ENCODE measurements at regions of chr9 and their contacts with region 1.

Region 1: DNA sequence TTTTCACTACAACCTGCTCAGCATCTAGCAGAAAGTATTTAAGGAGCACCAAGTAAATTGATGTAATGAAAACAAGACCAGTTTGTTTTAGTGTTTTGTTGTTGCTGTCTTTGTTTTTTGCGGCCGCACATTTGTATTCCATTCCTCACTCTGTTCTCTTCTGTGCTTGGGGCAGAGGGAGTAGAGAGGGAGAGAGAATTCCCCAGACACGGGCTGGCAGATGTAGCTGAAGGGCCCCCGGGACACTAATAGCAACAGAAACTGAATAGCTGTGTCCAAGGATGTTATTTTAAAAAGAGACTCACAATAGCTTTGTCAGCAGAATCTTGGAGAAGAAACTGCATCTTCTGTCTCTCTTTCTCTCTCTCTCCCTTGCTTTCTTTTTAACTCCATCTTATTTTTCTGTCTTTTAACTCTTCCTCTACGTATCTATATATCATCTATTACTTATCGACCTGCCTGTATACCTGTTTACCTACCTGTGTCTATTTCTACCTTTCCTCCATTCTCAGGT is 145.3 kb downstream of the PAPPA start:
- DNase-seq: no peak
- ATAC-seq: no peak
- H3K4me3 ChIP-seq: no peak overlapping the region
- H3K4me3 Mint-ChIP-seq: no peak overlapping the region
- H3K27ac ChIP-seq: no peak overlapping the region
- H3K27ac Mint-ChIP-seq: no peak overlapping the region
- H3K4me1 ChIP-seq: no peaks in the 10 kb centered on the region
- H3K4me1 Mint-ChIP-seq: no peaks in the 10 kb centered on the region
- H3K27me3 ChIP-seq: no peaks in the 10 kb centered on the region
- H3K27me3 Mint-ChIP-seq: peaks cover 4% of the 10 kb centered on the region
- CTCF ChIP-seq: no peak

Region 2: GRCh38 chr9:116313638-116314037 is 14.7 kb after region 1 on chr9:
- CTCF ChIA-PET with region 1: no interaction called
- POLR2A ChIA-PET with region 1: no interaction called
- intact Hi-C with region 1: no loop called
- DNase-seq: no peak
- ATAC-seq: no peak
- H3K4me3 ChIP-seq: no peak overlapping the region
- H3K4me3 Mint-ChIP-seq: no peak overlapping the region
- H3K27ac ChIP-seq: no peak overlapping the region
- H3K27ac Mint-ChIP-seq: no peak overlapping the region
- H3K4me1 ChIP-seq: no peaks in the 10 kb centered on the region
- H3K4me1 Mint-ChIP-seq: no peaks in the 10 kb centered on the region
- H3K27me3 ChIP-seq: no peaks in the 10 kb centered on the region
- H3K27me3 Mint-ChIP-seq: no peaks in the 10 kb centered on the region
- CTCF ChIP-seq: no peak

Region 3: DNA sequence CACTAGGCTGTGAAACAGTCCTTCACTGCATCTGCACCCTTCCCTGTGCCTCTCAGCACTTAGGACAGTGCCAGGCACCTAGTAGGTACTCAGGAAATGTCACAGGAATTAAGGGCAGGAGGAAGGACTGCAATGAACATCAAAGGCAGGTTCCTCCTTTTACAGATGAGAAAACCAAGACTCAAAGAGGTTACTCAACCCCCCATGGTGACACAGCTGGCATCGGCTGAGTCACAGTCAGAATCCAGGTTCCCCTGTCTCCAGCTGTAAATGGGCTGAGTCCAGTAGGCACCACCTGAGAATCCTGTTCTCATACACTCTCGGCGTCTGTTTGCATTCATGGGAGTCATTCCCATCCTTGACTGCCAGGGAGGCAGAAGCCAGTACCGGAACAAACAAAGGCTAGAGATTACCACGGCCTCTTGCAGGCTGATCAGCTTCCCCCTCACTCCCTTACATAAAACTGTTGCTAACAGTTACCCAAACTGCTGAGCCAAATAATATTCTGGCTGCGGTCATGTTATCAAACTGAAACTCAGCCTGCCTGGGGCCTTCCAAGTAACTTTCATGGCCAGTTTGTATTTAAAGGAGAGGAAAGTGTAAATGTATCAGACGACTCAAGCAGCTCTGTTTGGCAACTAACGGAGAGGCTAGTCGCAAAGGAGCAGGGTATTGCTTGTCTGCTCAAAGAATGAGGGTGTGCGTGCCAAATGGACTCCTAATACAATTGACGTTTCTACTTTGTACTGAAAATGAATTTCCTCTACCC is 56.4 kb after region 1 on chr9:
- CTCF ChIA-PET with region 1: no interaction called
- POLR2A ChIA-PET with region 1: no interaction called
- intact Hi-C with region 1: loop called in 1 of 2 experiments (anchors 10 kb)
- DNase-seq: no peak
- ATAC-seq: no peak
- H3K4me3 ChIP-seq: no peak overlapping the region
- H3K4me3 Mint-ChIP-seq: no peak overlapping the region
- H3K27ac ChIP-seq: no peak overlapping the region
- H3K27ac Mint-ChIP-seq: no peak overlapping the region
- H3K4me1 ChIP-seq: no peaks in the 10 kb centered on the region
- H3K4me1 Mint-ChIP-seq: no peaks in the 10 kb centered on the region
- H3K27me3 ChIP-seq: no peaks in the 10 kb centered on the region
- H3K27me3 Mint-ChIP-seq: peaks cover 4% of the 10 kb centered on the region
- CTCF ChIP-seq: no peak

Measured in CD8-positive, alpha-beta T cell (primary cell).